ENCODE measurements at regions of chr6 and their contacts with region 1.

Region 1: GRCh38 chr6:56955171-56956045 is 501 bp downstream of the BEND6 start:
- DNase-seq: peak in 9 of 10 donors; percentile 40 to 86 (median 73)
- H3K4me3 ChIP-seq: peak overlapping the region; percentile 48 to 91 (median 76)
- H3K27ac ChIP-seq: peak overlapping the region; percentile 21 to 93 (median 85)
- H3K27me3 ChIP-seq: no peaks in the 10 kb centered on the region
- CTCF ChIP-seq: peak; percentile 30 to 88 (median 72)

Region 2: GRCh38 chr6:56659721-56660380 is 295.6 kb before region 1 on chr6:
- intact Hi-C with region 1: loop called in 1 of 2 experiments (anchors 10 kb)
- DNase-seq: peak in 2 of 10 donors; percentile 48 to 52
- H3K4me3 ChIP-seq: no peak overlapping the region
- H3K27ac ChIP-seq: peak overlapping the region in 52 of 59 donors; percentile 1 to 98 (median 56)
- H3K27me3 ChIP-seq: no peaks in the 10 kb centered on the region
- CTCF ChIP-seq: no peak

Region 3: DNA sequence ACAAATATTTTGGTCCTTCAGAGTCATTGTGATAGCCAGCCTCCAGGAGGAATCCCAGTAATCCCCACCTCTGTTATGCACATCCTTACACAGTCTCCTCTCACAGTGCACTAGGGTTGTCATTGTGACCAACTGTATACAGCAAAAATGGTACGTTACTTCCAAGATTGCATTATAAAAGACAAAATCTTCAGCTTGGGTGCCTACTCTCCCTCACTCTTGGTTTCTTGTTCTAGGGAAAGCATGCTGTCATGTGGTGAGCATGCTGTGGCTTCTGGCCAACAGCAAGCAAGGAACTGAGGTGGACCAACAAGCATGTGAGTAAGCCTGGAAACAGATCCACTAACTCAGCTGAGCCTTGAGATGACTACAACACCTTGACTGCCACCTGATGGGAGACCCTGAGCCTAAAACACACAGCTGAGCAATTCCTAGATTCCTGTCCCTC is 182.6 kb before region 1 on chr6:
- intact Hi-C with region 1: loop called in 1 of 2 experiments (anchors 10 kb)
- DNase-seq: peak in 3 of 10 donors; percentile 18 to 62 (median 40)
- H3K4me3 ChIP-seq: no peak overlapping the region
- H3K27ac ChIP-seq: peak overlapping the region in 36 of 59 donors; percentile 4 to 70 (median 38)
- H3K27me3 ChIP-seq: no peaks in the 10 kb centered on the region
- CTCF ChIP-seq: no peak

Region 4: GRCh38 chr6:56914798-56915658 is 40.4 kb before region 1 on chr6:
- intact Hi-C with region 1: loop called in 1 of 2 experiments (anchors 5 kb)
- DNase-seq: peak; percentile 41 to 89 (median 76)
- H3K4me3 ChIP-seq: peak overlapping the region in 10 of 59 donors; percentile 1 to 24 (median 8)
- H3K27ac ChIP-seq: peak overlapping the region in 52 of 59 donors; percentile 5 to 86 (median 52)
- H3K27me3 ChIP-seq: no peaks in the 10 kb centered on the region
- CTCF ChIP-seq: no peak

Region 5: DNA sequence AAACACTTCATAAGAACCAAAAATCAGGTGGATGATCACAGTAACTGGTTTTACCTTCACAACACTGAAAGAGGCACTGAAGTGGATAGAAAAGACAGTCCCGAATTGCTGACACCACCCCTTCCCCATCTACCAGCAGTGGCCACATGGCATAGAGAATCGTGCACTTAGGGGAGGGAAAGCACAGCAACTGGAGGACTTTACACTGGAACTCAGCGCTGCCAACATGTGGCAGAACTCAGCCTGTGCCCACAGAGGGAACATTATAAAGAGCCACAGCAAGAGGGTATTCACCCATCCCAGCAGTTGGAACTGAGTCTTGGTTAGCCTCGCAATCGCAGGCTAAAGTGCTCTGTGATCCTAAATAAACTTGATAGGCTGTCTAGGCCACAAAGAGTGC is 84.6 kb after region 1 on chr6:
- intact Hi-C with region 1: loop called (anchors 10 kb)
- DNase-seq: no peak
- H3K4me3 ChIP-seq: no peak overlapping the region
- H3K27ac ChIP-seq: no peak overlapping the region
- H3K27me3 ChIP-seq: peaks cover 0 to 12% (median 0%) of the 10 kb centered on the region in 45 donors
- CTCF ChIP-seq: no peak

Region 6: DNA sequence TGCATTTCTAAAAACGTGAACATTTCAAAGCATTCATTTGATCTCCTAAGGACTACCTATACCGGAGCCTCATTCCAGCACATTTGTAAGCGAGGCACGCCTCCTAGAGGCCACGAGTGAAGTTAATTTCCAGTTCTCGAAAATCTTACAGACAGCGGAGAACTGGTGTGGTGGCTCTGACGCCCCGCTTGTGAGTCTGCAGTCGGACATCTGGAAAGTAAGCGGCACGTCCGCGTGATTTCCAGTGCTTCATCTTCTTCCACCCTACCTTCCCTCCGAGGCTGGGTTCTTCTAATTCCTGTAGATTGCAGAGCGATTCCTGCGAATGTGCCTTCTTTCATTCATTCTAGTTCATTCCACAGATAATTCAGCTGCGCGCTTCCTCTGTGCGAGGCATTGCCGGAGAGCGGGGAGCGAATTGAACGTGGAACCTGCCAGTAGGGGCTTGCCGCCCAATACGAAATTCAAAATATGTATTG is 361.2 kb after region 1 on chr6:
- intact Hi-C with region 1: loop called (anchors 2 to 10 kb)
- DNase-seq: peak; percentile 67 to 89 (median 84)
- H3K4me3 ChIP-seq: peak overlapping the region; percentile 40 to 98 (median 71)
- H3K27ac ChIP-seq: peak overlapping the region in 56 of 59 donors; percentile 39 to 92 (median 77)
- H3K27me3 ChIP-seq: no peaks in the 10 kb centered on the region
- CTCF ChIP-seq: peak; percentile 67 to 95 (median 85)

Measured in dorsolateral prefrontal cortex (tissue), 120 donors.